Dendritic cell treated with granulocyte-macrophage colony-stimulating factor and Interleukin-4, amounts not matched to agents 40 ng/mL and 50 ng/mL, for 4 days (primary cell): ENCODE measurements at regions of chr11 and their contacts with region 1.

Region 1: GRCh38 chr11:12043959-12044819 is 35.8 kb upstream of the DKK3 start:
- H3K4me3 Mint-ChIP-seq: no peak overlapping the region
- H3K27ac Mint-ChIP-seq: peak overlapping the region; percentile 9
- H3K4me1 Mint-ChIP-seq: peaks cover 39% of the 10 kb centered on the region
- H3K27me3 Mint-ChIP-seq: no peaks in the 10 kb centered on the region

Region 2: GRCh38 chr11:11798586-11799438 is 245.4 kb before region 1 on chr11:
- intact Hi-C with region 1: loop called (anchors 1 kb)
- H3K4me3 Mint-ChIP-seq: no peak overlapping the region
- H3K27ac Mint-ChIP-seq: no peak overlapping the region
- H3K4me1 Mint-ChIP-seq: no peaks in the 10 kb centered on the region
- H3K27me3 Mint-ChIP-seq: peaks cover 28% of the 10 kb centered on the region

Region 3: DNA sequence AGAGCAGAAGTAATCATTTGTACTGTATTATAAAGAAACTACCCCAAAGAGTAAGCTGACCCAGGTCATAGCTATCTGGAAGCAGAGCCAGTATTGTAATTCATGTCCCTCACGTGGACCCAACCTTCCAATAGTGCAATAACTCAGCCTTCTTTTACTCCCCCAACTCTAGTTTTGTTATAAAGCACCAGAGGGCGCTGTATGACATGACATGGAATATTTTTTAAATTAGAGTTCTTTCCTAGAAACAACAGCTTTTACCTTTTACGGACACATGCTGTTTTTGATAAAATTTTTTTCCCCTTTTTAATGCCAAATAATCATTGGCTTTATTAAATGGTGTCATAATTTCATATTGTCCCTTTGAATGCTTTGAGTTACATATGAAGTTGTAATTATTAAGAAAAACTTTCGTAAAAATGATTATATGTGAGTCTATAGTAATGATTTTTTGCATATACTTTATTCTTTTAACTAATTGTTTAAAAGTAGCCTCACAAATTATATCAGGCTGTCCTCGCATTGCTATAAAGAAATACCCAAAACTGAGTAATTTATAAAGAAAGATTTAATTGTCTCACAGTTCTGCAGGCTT is 112.6 kb before region 1 on chr11:
- intact Hi-C with region 1: loop called (anchors 1 kb)
- H3K4me3 Mint-ChIP-seq: no peak overlapping the region
- H3K27ac Mint-ChIP-seq: no peak overlapping the region
- H3K4me1 Mint-ChIP-seq: peaks cover 3% of the 10 kb centered on the region
- H3K27me3 Mint-ChIP-seq: no peaks in the 10 kb centered on the region

Region 4: DNA sequence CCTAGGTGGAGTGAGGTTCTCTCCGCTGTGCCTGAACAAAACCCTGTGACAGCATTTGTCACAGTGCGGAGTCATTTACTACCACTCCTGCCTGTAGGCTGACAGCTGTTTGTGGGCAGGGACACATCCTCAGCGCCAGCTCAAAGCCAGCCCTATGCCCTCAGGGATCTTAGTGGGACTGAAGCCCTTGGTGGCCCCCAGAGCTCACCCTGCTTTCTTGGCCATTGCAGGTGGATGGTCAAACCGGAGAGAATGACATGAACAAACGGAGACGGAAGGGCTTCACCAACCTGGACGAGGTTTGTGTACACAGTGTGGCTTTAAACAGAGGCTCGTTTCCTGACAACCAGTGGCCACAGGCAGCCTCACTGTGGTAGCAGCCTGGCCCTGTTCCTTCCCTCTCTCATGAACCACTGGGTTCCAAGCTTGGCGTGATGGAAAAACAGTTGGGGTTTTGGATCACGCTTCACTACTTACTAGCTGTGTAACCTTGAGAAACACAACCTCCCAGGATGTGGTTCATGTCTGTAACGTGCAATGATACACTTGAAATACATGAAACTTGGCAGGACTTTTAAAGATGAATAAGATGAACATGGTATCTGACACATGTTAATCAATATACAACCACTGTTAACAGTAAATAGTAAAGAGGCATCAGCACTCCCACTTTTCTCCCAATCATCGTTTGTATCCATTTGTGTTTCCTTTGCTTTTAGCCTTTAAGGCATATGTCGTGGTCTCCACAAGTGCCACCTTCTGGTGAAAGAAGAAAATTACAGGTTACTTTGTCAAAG is 192.0 kb after region 1 on chr11:
- intact Hi-C with region 1: loop called (anchors 1 kb)
- H3K4me3 Mint-ChIP-seq: no peak overlapping the region
- H3K27ac Mint-ChIP-seq: no peak overlapping the region
- H3K4me1 Mint-ChIP-seq: peaks cover 22% of the 10 kb centered on the region
- H3K27me3 Mint-ChIP-seq: no peaks in the 10 kb centered on the region

Region 5: GRCh38 chr11:12281571-12282478 is 237.6 kb after region 1 on chr11:
- intact Hi-C with region 1: loop called (anchors 1 kb)
- H3K4me3 Mint-ChIP-seq: no peak overlapping the region
- H3K27ac Mint-ChIP-seq: no peak overlapping the region
- H3K4me1 Mint-ChIP-seq: peaks cover 5% of the 10 kb centered on the region
- H3K27me3 Mint-ChIP-seq: peaks cover 2% of the 10 kb centered on the region